B cell (primary cell): ENCODE measurements at regions of chr6 and their contacts with region 1.

Region 1: GRCh38 chr6:113755449-113756289 is 101.5 kb upstream of the MARCKS start:
- DNase-seq: peak; percentile 27
- ATAC-seq: peak; percentile 64
- H3K4me3 ChIP-seq: no peak overlapping the region
- H3K4me3 Mint-ChIP-seq: peak overlapping the region; percentile 64
- H3K27ac ChIP-seq: no peak overlapping the region
- H3K27ac Mint-ChIP-seq: peak overlapping the region; percentile 71
- H3K4me1 ChIP-seq: peaks cover 15 to 17% of the 10 kb centered on the region in 2 donors
- H3K4me1 Mint-ChIP-seq: peaks cover 45% of the 10 kb centered on the region
- H3K27me3 ChIP-seq: no peaks in the 10 kb centered on the region
- H3K27me3 Mint-ChIP-seq: no peaks in the 10 kb centered on the region
- CTCF ChIP-seq: no peak

Region 2: GRCh38 chr6:113672491-113673149 is 83.0 kb before region 1 on chr6:
- CTCF ChIA-PET with region 1: no interaction called
- POLR2A ChIA-PET with region 1: no interaction called
- intact Hi-C with region 1: no loop called
- DNase-seq: no peak
- ATAC-seq: no peak
- H3K4me3 ChIP-seq: no peak overlapping the region
- H3K4me3 Mint-ChIP-seq: no peak overlapping the region
- H3K27ac ChIP-seq: no peak overlapping the region
- H3K27ac Mint-ChIP-seq: no peak overlapping the region
- H3K4me1 ChIP-seq: peaks cover 0 to 4% of the 10 kb centered on the region in 2 donors
- H3K4me1 Mint-ChIP-seq: peaks cover 10% of the 10 kb centered on the region
- H3K27me3 ChIP-seq: no peaks in the 10 kb centered on the region
- H3K27me3 Mint-ChIP-seq: no peaks in the 10 kb centered on the region
- CTCF ChIP-seq: no peak

Region 3: GRCh38 chr6:113684382-113684901 is 71.2 kb before region 1 on chr6:
- CTCF ChIA-PET with region 1: no interaction called
- POLR2A ChIA-PET with region 1: no interaction called
- intact Hi-C with region 1: loop called (anchors 10 kb)
- DNase-seq: peak; percentile 15
- ATAC-seq: no peak
- H3K4me3 ChIP-seq: no peak overlapping the region
- H3K4me3 Mint-ChIP-seq: peak overlapping the region; percentile 15
- H3K27ac ChIP-seq: no peak overlapping the region
- H3K27ac Mint-ChIP-seq: no peak overlapping the region
- H3K4me1 ChIP-seq: peaks cover 9 to 15% of the 10 kb centered on the region in 2 donors
- H3K4me1 Mint-ChIP-seq: peaks cover 31% of the 10 kb centered on the region
- H3K27me3 ChIP-seq: no peaks in the 10 kb centered on the region
- H3K27me3 Mint-ChIP-seq: no peaks in the 10 kb centered on the region
- CTCF ChIP-seq: no peak

Region 4: DNA sequence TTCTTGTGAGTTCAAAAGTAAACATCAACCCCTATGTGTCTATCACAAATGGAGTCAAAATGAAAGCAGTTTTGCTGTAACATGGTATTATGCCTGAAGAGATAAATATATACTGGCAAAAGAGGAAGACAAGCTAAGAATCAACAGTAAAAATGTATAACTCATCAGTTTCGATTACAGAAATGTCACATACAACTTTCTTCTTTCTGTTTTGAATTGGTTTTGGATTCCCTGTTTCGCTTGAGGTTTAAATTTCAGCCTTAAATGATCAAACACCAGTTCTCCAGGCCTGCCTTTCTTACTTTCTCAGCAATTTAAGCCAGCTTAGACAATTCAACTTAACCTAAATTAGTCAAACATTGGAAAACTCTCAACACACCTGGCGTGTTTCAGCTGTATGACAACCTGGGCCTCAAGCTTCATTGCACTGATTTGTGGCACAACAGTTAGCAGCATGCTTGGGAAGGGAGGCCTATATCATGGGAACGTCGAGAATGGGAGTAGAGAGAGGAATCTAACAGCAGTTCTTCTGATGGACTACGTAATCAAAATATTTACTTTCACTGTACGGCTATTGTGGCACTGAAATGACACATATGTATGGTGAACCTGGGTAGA is 49.6 kb after region 1 on chr6:
- CTCF ChIA-PET with region 1: no interaction called
- POLR2A ChIA-PET with region 1: no interaction called
- intact Hi-C with region 1: loop called (anchors 5 kb)
- DNase-seq: peak; percentile 63
- ATAC-seq: peak; percentile 38
- H3K4me3 ChIP-seq: peak overlapping the region in 2 of 5 experiments; percentile 13 to 45
- H3K4me3 Mint-ChIP-seq: peak overlapping the region; percentile 64
- H3K27ac ChIP-seq: peak overlapping the region; percentile 46 to 50
- H3K27ac Mint-ChIP-seq: peak overlapping the region; percentile 81
- H3K4me1 ChIP-seq: peaks cover 41 to 47% of the 10 kb centered on the region in 2 donors
- H3K4me1 Mint-ChIP-seq: peaks cover 51% of the 10 kb centered on the region
- H3K27me3 ChIP-seq: no peaks in the 10 kb centered on the region
- H3K27me3 Mint-ChIP-seq: no peaks in the 10 kb centered on the region
- CTCF ChIP-seq: no peak